SK-N-SH (cell line): ENCODE measurements at regions of chr11 and their contacts with region 1.

Region 1: DNA sequence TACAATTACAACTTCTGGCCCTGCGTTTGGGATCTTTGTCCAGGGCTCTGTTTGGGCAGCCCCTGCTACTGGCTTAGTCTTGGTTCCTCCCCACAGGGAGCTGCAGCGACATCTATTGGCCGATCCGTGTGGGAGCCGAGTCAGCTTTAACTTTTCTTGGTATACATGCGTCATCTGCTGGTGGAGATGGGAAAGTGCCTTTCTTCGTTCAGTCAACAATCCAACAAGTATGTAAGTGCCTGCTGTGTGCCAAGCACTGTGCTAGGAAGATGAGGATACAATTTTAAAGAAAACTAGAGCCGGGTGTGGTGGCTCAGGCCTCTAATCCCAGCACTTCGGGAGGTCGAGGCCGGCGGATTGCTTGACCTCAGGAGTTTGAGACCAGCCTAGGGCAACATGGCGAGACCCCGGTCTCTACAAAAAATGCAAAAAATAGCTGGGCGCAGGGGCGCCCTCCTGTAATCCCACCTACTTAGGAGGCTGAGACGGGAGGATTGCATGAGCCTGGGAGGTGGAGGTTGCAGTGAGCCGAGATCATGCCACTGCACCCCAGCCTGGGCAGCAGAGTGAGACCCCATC is 8.2 kb downstream of the TPBGL start:
- DNase-seq: peak; percentile 90
- H3K4me3 ChIP-seq: peak overlapping the region in 1 of 2 experiments; percentile 54; a peak in 1 of 4 replicates
- H3K27ac ChIP-seq: no peak overlapping the region
- H3K4me1 ChIP-seq: peaks cover 0 to 5% of the 10 kb centered on the region in 2 experiments; a peak in 1 of 4 replicates
- H3K27me3 ChIP-seq: peaks cover 20% of the 10 kb centered on the region
- CTCF ChIP-seq: peak; percentile 100
- EP300 ChIP-seq: no peak
- RAD21 ChIP-seq: peak; percentile 100

Region 2: DNA sequence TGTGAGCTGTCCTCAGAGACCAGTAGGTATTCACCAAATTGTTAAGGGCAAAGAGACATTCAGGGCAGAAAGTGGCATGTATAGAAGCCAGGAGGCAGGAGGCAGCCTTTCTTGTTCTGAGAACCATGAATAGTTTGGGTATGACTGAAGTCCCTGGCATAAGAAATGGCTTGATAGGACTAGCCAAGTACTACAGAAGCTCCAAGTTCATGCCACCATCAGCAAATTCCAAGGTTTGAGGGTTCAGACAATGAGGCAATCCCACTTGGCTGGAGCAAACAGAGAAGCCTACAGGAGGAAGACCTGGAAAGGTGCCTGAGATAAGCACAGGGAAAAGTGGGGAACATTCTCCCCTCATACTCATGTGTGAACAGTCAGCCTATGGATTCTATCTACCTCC is 325.7 kb before region 1 on chr11:
- CTCF ChIA-PET with region 1: interaction called, 113 read pairs
- POLR2A ChIA-PET with region 1: no interaction called
- DNase-seq: no peak
- H3K4me3 ChIP-seq: no peak overlapping the region
- H3K27ac ChIP-seq: no peak overlapping the region
- H3K4me1 ChIP-seq: no peaks in the 10 kb centered on the region; a peak in 1 of 4 replicates
- H3K27me3 ChIP-seq: no peaks in the 10 kb centered on the region
- CTCF ChIP-seq: no peak
- EP300 ChIP-seq: no peak
- RAD21 ChIP-seq: no peak

Region 3: DNA sequence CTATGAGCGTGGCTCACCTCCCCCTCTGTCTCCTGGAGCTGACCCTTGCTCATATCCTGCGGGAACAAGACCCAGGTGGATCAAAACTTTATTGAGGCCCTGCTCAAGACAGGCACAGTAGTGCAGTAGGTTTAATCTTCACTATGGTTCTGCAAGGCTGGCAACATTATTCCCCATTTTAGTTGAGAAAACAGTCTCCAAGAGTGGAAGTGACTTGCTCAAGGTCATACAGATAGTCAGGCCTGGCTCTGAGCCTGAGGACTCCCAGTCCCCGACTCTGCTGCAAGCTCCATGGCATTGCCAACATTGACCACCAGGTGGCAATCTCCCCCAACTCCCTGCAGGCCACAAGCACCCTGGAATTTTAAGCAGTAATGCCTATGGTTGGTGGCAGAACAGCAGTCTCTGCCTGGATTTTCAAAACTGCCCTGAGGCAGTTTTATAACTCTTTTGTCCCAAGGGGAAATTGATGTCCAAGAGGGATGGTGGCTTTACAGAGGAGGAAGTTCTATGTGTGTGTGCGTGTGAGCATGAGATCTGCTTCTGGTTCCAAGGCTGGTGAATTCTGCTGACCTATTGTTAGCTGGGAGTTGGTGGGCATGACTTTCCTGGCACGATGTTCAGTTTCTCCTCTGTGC is 225.9 kb before region 1 on chr11:
- CTCF ChIA-PET with region 1: interaction called, 258 read pairs
- POLR2A ChIA-PET with region 1: no interaction called
- DNase-seq: peak; percentile 79
- H3K4me3 ChIP-seq: no peak overlapping the region; a peak in 1 of 4 replicates
- H3K27ac ChIP-seq: no peak overlapping the region
- H3K4me1 ChIP-seq: peaks cover 0 to 13% of the 10 kb centered on the region in 2 experiments; a peak in 1 of 4 replicates
- H3K27me3 ChIP-seq: no peaks in the 10 kb centered on the region
- CTCF ChIP-seq: peak; percentile 96
- EP300 ChIP-seq: no peak
- RAD21 ChIP-seq: peak; percentile 95

Region 4: GRCh38 chr11:75073459-75074190 is 175.2 kb before region 1 on chr11:
- CTCF ChIA-PET with region 1: interaction called, 12 read pairs
- POLR2A ChIA-PET with region 1: no interaction called
- DNase-seq: no peak
- H3K4me3 ChIP-seq: no peak overlapping the region
- H3K27ac ChIP-seq: no peak overlapping the region
- H3K4me1 ChIP-seq: no peaks in the 10 kb centered on the region
- H3K27me3 ChIP-seq: no peaks in the 10 kb centered on the region; the same call in 1 of the 2 replicates
- CTCF ChIP-seq: peak; percentile 20; the same call in 1 of the 2 replicates
- EP300 ChIP-seq: no peak
- RAD21 ChIP-seq: no peak

Region 5: DNA sequence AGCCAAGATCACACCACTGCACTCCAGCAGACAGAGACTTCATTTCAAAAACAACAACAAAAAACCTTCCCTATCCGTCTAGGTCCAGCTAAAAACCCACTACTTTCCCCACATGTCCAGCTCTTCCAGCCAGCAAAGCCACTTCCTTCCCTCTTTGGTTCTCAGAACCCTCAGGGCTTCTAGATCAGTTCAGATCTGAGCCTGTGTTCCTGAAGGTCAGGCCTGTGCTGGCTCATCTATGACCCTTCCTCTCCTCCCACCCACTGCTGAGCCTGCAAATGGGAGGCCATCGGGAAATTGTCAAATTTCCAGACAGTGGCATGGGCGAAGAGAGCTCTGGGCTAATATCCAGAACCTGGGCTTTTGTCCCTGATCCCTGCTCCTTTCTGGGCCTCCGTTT is 60.1 kb before region 1 on chr11:
- CTCF ChIA-PET with region 1: interaction called, 13 read pairs
- POLR2A ChIA-PET with region 1: no interaction called
- DNase-seq: no peak
- H3K4me3 ChIP-seq: no peak overlapping the region
- H3K27ac ChIP-seq: no peak overlapping the region
- H3K4me1 ChIP-seq: peaks cover 0 to 8% of the 10 kb centered on the region in 2 experiments; a peak in 1 of 4 replicates
- H3K27me3 ChIP-seq: no peaks in the 10 kb centered on the region; the same call in 1 of the 2 replicates
- CTCF ChIP-seq: no peak
- EP300 ChIP-seq: no peak
- RAD21 ChIP-seq: no peak

Region 6: GRCh38 chr11:75223954-75224643 is 24.7 kb before region 1 on chr11:
- CTCF ChIA-PET with region 1: interaction called, 18 read pairs
- POLR2A ChIA-PET with region 1: no interaction called
- DNase-seq: no peak
- H3K4me3 ChIP-seq: no peak overlapping the region
- H3K27ac ChIP-seq: no peak overlapping the region
- H3K4me1 ChIP-seq: peaks cover 0 to 2% of the 10 kb centered on the region in 2 experiments; a peak in 1 of 4 replicates
- H3K27me3 ChIP-seq: 0 out of 2 replicates have a peak, but pooled peaks cover 5% of the 10 kb centered on the region
- CTCF ChIP-seq: no peak
- EP300 ChIP-seq: no peak
- RAD21 ChIP-seq: no peak; the same call in 1 of the 2 replicates

Region 7: GRCh38 chr11:75270896-75271418 is 22.2 kb after region 1 on chr11:
- CTCF ChIA-PET with region 1: interaction called, 15 read pairs
- POLR2A ChIA-PET with region 1: no interaction called
- DNase-seq: no peak
- H3K4me3 ChIP-seq: no peak overlapping the region
- H3K27ac ChIP-seq: no peak overlapping the region
- H3K4me1 ChIP-seq: peaks cover 0 to 11% of the 10 kb centered on the region in 2 experiments; a peak in 1 of 4 replicates
- H3K27me3 ChIP-seq: no peaks in the 10 kb centered on the region
- CTCF ChIP-seq: peak; percentile 34; the same call in 1 of the 2 replicates
- EP300 ChIP-seq: no peak
- RAD21 ChIP-seq: peak; percentile 49

Region 8: GRCh38 chr11:75325700-75326438 is 77.1 kb after region 1 on chr11:
- CTCF ChIA-PET with region 1: no interaction called
- POLR2A ChIA-PET with region 1: no interaction called
- DNase-seq: no peak
- H3K4me3 ChIP-seq: no peak overlapping the region
- H3K27ac ChIP-seq: no peak overlapping the region
- H3K4me1 ChIP-seq: peaks cover 11 to 22% of the 10 kb centered on the region in 2 experiments; a peak in 3 of 4 replicates
- H3K27me3 ChIP-seq: no peaks in the 10 kb centered on the region
- CTCF ChIP-seq: no peak
- EP300 ChIP-seq: no peak
- RAD21 ChIP-seq: no peak